WTC11 (cell line): ENCODE measurements at regions of chr11 and their contacts with region 1.

Region 1: DNA sequence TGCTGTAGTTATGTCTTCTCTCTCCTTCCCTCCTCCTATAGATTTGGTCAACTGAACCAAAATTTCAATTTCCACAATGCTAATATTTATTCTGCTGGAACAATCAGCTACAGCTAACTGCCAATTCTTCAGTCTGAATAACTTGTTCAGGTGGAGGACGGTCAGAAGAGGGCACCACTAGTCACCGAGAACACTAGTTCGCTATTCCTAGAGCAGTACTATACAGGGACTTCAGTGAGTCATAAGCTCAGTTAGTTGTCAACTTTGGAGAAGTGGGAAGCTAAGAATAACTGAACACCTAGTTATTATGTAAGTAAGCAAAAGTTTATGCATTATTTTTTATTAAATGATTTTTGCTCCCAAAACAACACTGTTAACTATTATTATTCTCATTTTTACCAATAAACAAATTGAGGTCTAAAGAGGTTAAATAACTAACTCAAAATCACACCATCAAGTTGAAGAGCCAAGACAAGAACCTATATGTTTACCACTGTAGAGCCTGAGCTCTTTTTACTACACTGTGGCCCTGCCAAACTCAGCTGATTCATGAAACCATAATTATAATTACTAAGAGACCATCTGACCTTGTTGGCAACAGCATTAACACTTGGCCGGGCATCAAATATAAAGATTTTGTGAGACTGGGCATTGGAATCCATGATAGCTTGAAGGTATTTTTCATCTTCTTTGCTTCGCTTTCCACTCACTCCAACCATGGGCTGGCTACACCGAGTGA is 59.0 kb downstream of the CEP57 start:
- DNase-seq: peak; percentile 30
- ATAC-seq: peak; percentile 96
- H3K4me3 Mint-ChIP-seq: no peak overlapping the region
- H3K27ac Mint-ChIP-seq: no peak overlapping the region
- H3K4me1 Mint-ChIP-seq: no peaks in the 10 kb centered on the region
- H3K27me3 Mint-ChIP-seq: no peaks in the 10 kb centered on the region
- CTCF ChIP-seq: no peak

Region 2: DNA sequence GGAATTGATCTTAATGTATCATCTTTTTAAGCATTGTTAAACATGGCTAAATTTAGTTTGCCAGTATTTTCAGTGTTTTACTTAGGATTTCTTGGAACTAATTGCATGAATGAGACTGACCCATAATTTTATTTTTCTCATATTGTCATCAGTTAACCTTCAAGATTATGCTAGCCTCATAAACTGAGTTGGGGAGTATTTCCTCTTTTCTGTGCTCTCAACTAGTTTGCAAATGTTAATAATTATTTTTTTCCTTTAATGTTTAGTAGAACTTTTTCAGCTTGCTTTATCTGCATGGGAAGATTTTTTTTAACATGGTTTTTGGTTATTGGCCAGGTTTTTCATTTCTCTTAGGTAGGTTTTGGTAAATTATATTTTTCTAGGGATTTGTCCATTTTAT is 382.9 kb before region 1 on chr11:
- CTCF ChIA-PET with region 1: no interaction called
- POLR2A ChIA-PET with region 1: no interaction called
- DNase-seq: no peak
- ATAC-seq: no peak
- H3K4me3 Mint-ChIP-seq: no peak overlapping the region
- H3K27ac Mint-ChIP-seq: no peak overlapping the region
- H3K4me1 Mint-ChIP-seq: no peaks in the 10 kb centered on the region
- H3K27me3 Mint-ChIP-seq: no peaks in the 10 kb centered on the region
- CTCF ChIP-seq: no peak

Region 3: DNA sequence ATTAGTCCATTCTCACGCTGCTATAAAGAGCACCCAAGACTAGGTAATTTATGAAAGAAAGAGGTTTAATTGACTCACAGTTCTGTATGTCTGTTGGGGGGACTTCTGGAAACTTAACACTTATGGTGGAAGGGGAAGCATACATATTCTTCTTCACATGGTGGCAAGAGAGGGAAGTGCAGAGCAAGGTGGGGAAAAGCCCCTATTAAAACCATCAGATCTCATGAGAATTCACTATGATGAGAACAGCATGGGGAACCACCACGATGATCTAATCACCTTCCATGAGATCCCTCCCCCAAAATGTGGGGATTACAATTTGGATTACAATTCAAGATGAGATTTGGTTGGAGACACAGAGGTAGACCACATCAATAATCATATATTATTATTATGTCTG is 33.2 kb before region 1 on chr11:
- CTCF ChIA-PET with region 1: no interaction called
- POLR2A ChIA-PET with region 1: no interaction called
- DNase-seq: no peak
- ATAC-seq: no peak
- H3K4me3 Mint-ChIP-seq: no peak overlapping the region
- H3K27ac Mint-ChIP-seq: no peak overlapping the region
- H3K4me1 Mint-ChIP-seq: no peaks in the 10 kb centered on the region
- H3K27me3 Mint-ChIP-seq: no peaks in the 10 kb centered on the region
- CTCF ChIP-seq: no peak

Region 4: GRCh38 chr11:96006037-96006436 is 156.8 kb after region 1 on chr11:
- CTCF ChIA-PET with region 1: no interaction called
- POLR2A ChIA-PET with region 1: no interaction called
- DNase-seq: no peak
- ATAC-seq: no peak
- H3K4me3 Mint-ChIP-seq: no peak overlapping the region
- H3K27ac Mint-ChIP-seq: no peak overlapping the region
- H3K4me1 Mint-ChIP-seq: peaks cover 20% of the 10 kb centered on the region
- H3K27me3 Mint-ChIP-seq: no peaks in the 10 kb centered on the region
- CTCF ChIP-seq: no peak

Region 5: DNA sequence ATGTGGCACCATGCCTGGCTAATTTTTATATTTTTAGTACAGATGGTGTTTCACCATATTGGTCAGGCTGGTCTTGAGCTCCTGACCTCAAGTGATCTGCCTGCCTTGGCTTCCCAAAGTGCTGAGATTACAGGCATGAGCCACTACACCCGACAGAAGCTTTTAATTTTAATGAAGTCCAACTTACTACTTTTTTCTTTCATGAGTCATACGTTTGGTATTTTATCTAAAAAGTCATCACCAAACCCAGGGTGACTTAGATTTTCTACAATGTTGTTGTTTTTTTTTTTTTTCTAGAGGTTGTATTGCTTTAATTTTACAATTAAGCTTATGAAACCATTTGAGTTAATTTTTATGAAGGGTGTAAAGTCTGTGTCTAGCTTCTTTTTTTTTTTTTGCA is 575.4 kb after region 1 on chr11:
- CTCF ChIA-PET with region 1: interaction called, 13 read pairs
- POLR2A ChIA-PET with region 1: no interaction called
- DNase-seq: no peak
- ATAC-seq: no peak
- H3K4me3 Mint-ChIP-seq: no peak overlapping the region
- H3K27ac Mint-ChIP-seq: no peak overlapping the region
- H3K4me1 Mint-ChIP-seq: peaks cover 7% of the 10 kb centered on the region
- H3K27me3 Mint-ChIP-seq: no peaks in the 10 kb centered on the region
- CTCF ChIP-seq: no peak